Lower leg skin (tissue), 4 donors: ENCODE measurements at regions of chr10 and their contacts with region 1.

Region 1: DNA sequence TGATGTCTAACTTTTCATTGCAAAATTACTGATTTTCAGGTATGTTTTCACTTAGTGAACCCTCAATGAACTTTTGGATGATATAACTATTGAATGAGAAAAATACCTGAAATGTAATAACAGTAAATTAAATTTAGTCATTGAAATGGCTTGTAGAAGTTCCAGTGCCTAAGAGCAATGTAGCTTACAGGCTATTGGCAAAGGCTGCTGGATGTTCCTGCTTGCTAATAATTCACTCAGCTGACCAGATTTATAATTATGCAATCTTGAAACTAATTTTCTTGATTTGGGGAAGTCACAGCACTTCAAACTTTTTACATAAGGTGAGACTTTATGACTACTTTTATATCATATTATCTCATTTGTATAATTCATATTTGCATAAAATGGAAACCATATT is 73.2 kb downstream of the SORBS1 start:
- DNase-seq: no peak
- H3K4me3 ChIP-seq: no peak overlapping the region
- CTCF ChIP-seq: no peak
- POLR2A ChIP-seq: no peak

Region 2: DNA sequence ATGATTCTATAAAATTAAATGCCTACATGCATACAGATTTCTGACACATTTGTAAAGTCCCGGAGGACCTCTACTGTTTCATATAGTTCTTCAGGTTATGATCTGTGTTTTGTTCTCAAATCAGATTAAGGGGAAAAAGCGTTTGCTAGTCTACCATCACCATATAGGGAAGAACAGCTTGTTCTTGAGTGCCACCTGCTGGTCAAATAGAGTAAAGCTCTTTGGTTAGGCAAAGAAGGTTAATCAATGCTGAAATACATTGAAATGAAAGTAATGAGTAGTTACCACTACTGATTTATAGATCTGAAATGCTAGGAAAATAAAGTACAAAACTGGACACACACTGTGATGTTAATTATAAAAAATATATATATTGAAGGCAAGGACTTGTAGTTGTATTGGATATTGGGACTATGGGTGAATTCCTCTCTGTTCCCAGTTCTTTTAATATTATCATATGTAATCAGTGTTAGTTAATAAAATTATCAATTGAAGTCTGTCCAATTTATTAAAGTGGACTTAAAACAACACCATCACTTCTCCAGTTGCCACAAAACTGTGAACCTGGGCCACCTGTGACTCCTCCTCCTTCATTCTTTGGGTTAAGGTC is 124.6 kb before region 1 on chr10:
- intact Hi-C with region 1: no loop called
- DNase-seq: peak in 1 of 2 donors; percentile 46
- H3K4me3 ChIP-seq: no peak overlapping the region
- CTCF ChIP-seq: no peak
- POLR2A ChIP-seq: no peak

Region 3: DNA sequence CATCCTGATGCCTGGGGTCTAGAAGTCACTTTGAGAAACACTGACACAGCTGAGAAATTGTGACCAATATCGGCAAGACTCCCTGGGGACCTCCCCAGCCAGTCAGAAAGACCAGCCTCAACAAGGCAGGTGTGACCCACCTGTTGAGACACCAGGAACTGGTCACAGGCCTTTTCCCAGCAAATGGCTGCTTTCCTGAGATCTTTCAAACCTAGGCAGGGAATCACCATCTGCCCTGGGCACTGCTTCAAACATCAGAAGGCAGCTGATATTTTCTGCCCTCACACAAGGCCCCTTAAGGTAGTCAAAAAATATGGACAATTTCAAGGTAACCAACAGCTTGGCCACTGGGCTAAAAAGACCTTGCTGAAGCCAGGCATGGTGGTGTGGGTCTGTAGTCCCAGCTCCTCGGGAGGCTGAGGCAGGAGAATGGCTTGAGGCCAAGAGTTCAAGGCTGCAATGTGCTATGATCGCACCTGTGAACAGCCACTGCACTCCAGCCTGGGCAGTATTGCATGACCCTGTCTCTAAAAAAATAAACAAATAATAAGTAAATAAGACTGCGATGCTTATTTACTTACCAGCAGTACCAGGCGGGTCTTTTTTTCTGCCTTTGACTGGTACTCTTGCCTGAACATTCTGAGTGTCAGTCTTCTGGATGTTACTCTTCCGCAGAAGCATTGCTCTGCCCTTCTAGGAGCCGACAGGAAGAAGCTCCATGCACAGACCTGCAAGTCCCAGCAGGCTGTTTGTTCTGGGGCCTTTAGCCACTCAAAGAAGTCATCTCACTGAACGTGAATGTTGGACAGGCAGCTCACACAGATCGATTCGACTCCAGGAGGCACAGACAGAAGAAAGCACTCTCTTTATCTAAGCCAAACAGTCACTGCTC is 13.5 kb after region 1 on chr10:
- intact Hi-C with region 1: loop called (anchors 2 kb)
- DNase-seq: no peak
- H3K4me3 ChIP-seq: no peak overlapping the region
- CTCF ChIP-seq: no peak
- POLR2A ChIP-seq: no peak